Posterior vena cava (tissue), 2 donors: ENCODE measurements at regions of chr16 and their contacts with region 1.

Region 1: DNA sequence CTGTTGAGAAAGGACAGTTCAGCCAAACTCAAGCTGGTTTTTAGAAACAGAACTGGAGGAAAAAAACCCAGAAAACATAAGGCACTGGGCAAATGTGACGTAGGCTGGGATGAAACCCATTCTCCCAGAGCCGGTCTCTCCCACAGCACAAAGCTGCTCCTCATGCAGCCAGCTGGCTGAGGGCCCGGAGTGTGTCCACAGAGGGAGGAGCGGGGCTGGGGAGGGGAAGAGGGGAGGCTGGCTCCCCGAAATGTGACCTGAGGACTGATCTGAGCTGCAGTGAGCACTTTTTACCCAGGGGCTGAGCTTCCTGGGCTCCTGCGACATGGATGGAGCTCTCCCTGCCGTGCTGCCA is 20.8 kb downstream of the FOXF1 start:
- DNase-seq: peak; percentile 90

Region 2: DNA sequence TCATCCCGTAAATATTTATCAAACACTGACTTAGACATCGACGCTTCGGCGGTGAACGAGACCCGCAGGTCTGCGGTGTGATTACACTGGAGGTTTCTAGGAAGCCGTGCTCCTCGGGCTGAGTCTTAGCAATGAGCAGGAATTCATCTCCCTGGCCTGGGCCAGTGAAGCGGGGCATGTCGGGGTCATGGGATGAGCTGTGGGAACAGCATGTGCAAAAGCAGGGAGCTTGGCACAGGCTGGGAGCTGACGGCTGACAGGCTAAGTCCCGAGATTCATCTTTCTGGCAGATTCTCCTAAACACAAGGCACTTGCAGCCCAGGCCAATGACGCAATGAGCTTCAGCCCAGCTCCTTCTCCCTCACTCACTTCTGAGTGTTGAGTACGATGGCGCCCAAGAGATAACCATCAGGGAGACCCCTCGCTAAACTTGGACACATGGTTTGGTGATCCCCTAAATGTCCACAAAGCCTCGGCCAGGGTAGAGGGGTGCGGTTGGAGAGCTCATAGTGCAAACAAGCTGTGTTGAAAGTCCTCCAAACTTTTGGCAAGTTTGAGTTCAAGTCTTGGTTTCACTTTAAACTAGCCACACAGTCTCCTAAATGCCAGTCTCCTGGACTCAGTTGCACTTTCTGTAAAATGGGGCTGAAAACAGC is 1698.6 kb before region 1 on chr16:
- intact Hi-C with region 1: loop called in 1 of 2 experiments (anchors 5 kb)
- DNase-seq: peak; percentile 97

Region 3: DNA sequence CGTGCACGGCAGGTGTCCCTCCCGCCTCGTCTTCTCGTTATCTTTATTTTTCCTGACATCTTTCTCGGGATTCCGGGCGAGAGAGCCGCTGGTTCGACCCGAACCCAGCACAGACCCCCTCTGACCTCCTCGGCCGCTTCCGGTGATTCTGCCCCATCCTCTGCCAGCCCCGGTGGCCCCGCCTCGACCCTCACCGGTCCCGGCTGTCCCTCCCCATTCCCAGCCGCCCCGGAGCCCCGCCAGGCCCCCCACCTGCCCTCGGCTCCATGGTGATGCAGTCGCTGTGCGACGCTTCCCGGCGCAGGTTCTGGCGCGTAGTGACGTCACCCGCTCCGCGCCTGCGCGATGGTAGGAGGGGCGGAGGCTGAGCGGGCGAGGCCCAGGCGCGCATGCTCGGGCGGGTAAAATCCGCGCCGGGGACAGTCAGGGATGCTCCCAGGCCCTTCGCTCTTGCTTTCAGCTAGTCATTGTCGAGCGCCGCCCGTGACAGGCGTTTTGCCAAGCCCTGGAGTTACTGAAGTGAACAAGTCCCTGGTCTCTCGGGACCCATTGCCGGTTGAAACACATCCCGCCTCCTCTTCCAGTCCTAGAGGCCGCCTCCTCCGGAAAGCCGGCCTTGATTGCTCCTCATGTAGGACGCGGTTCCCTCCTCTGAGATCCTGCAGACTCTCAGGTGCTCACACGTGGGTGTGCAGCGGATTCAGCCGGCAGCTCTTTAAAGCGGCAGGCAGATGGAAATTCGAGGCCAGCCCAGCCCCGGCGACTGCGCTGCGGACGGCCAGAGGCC is 23.9 kb after region 1 on chr16 and contains the start of gene MTHFSD:
- intact Hi-C with region 1: no loop called
- DNase-seq: peak; percentile 99
- total RNA-seq, gene MTHFSD: 11.8 to 14.1 TPM